Common myeloid progenitor, CD34-positive (primary cell): ENCODE measurements at regions of chr1 and their contacts with region 1.

Region 1: GRCh38 chr1:89598450-89599331 is 34.2 kb upstream of the LRRC8C start:
- DNase-seq: peak; percentile 42 to 73 (median 61)
- H3K4me3 ChIP-seq: no peak overlapping the region
- H3K27ac ChIP-seq: no peak overlapping the region
- H3K4me1 ChIP-seq: peaks cover 0 to 2% (median under 1%) of the 10 kb centered on the region in 4 experiments
- H3K27me3 ChIP-seq: no peaks in the 10 kb centered on the region

Region 2: DNA sequence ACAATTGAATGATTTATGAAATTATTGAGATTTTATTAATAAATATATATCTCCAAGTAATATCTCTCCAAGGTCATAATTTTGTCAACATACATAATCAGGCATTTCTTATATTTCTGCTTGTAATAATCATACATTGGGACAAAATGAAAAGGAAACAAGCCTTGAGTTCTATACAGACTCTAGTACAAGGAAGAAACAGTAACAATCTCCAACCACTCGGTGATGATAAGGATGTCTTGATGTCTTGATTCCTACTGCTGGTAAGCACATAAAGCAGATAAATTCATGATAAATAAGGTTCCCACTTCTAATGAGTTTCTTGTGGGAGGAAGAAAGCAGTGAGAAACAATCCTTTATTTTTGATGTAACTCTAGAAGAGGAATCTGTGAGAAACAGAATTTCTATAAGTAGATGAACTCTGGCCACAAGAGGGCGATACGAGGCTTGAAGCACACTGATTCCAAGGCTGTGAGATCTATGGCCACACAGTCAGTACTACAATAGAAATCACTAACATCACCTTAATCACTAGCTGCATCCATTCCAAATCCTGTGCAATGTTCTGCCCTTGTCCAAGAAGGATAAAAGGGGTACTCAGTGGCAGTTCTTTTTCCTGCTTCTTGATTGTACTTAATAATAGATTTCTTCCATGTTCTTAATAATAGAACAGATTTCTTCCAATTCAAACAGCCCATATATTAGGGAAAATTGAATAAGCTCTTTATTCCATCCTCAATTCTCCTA is 115.5 kb before region 1 on chr1:
- CTCF ChIA-PET with region 1: interaction called, 19 read pairs
- POLR2A ChIA-PET with region 1: no interaction called
- DNase-seq: peak; percentile 78 to 91 (median 88)
- H3K4me3 ChIP-seq: no peak overlapping the region
- H3K27ac ChIP-seq: no peak overlapping the region
- H3K4me1 ChIP-seq: peaks cover 0 to 17% (median 7%) of the 10 kb centered on the region in 4 experiments
- H3K27me3 ChIP-seq: peaks cover 0 to 1% (median 0%) of the 10 kb centered on the region in 5 experiments

Region 3: GRCh38 chr1:89519779-89520358 is 78.8 kb before region 1 on chr1:
- CTCF ChIA-PET with region 1: interaction called, 109 read pairs
- POLR2A ChIA-PET with region 1: no interaction called
- DNase-seq: peak; percentile 59 to 80 (median 74)
- H3K4me3 ChIP-seq: no peak overlapping the region
- H3K27ac ChIP-seq: no peak overlapping the region
- H3K4me1 ChIP-seq: peaks cover 0 to 12% (median 8%) of the 10 kb centered on the region in 4 experiments
- H3K27me3 ChIP-seq: no peaks in the 10 kb centered on the region

Region 4: DNA sequence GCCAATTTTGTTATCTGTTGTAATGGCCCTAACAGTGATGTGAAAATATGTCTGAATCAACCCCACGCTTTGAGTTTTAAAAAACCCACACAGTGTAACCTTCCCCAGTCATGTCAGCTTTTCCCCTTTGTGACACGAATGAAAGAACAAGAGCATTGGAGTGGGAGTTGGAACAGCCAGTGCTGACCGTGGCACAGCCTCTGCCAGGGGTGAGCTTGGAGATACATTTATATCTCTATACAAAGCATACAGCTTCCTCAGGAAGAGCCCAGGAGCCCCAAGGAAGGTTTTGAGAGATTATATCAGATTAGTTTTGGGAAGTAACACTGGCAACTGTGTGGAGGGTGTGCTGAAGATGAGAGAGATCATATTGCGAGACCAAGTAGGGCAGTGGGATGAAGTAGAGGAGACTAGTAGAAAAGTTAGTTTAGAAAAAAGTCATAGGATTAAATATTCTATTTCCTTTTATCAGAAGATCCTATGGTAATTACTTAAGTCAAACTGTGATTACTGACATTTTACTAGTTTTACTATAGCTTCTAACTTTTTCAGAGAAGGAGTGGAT is 58.2 kb before region 1 on chr1:
- CTCF ChIA-PET with region 1: interaction called, 12 read pairs
- POLR2A ChIA-PET with region 1: no interaction called
- DNase-seq: peak in 2 of 3 donors; percentile 23 to 36
- H3K4me3 ChIP-seq: peak overlapping the region in 5 of 7 experiments; percentile 1 to 30 (median 10)
- H3K27ac ChIP-seq: peak overlapping the region in 1 of 2 experiments; percentile 76
- H3K4me1 ChIP-seq: peaks cover 28 to 60% (median 48%) of the 10 kb centered on the region in 4 experiments
- H3K27me3 ChIP-seq: no peaks in the 10 kb centered on the region

Region 5: GRCh38 chr1:89550995-89551394 is 47.7 kb before region 1 on chr1:
- CTCF ChIA-PET with region 1: no interaction called
- POLR2A ChIA-PET with region 1: no interaction called
- DNase-seq: no peak
- H3K4me3 ChIP-seq: no peak overlapping the region
- H3K27ac ChIP-seq: peak overlapping the region in 1 of 2 experiments; percentile 50
- H3K4me1 ChIP-seq: peaks cover 20 to 42% (median 33%) of the 10 kb centered on the region in 4 experiments
- H3K27me3 ChIP-seq: no peaks in the 10 kb centered on the region

Region 6: DNA sequence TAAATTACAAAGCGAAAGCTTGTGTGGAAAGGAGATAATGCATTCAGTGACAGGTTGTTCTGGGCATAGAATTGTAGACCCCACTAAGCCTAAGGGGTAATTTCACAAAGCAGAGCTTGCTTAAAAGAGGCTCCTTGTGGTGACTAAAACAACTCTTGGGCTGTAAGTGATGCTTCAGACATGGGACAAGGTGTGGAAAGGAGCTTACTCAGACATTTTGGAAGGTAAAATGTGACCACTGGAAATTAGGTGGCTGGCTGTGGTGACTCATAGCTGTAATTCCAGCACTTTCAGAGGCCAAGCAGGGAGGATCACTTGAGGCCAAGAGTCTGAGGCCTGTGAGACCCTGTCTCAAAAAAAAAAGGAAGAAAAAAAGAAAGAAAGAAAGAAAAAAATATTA is 16.8 kb before region 1 on chr1:
- CTCF ChIA-PET with region 1: interaction called, 10 read pairs
- POLR2A ChIA-PET with region 1: interaction called, 3 read pairs
- DNase-seq: no peak
- H3K4me3 ChIP-seq: no peak overlapping the region
- H3K27ac ChIP-seq: no peak overlapping the region
- H3K4me1 ChIP-seq: no peaks in the 10 kb centered on the region
- H3K27me3 ChIP-seq: no peaks in the 10 kb centered on the region